ENCODE measurements at regions of chr9 and their contacts with region 1.

Region 1: DNA sequence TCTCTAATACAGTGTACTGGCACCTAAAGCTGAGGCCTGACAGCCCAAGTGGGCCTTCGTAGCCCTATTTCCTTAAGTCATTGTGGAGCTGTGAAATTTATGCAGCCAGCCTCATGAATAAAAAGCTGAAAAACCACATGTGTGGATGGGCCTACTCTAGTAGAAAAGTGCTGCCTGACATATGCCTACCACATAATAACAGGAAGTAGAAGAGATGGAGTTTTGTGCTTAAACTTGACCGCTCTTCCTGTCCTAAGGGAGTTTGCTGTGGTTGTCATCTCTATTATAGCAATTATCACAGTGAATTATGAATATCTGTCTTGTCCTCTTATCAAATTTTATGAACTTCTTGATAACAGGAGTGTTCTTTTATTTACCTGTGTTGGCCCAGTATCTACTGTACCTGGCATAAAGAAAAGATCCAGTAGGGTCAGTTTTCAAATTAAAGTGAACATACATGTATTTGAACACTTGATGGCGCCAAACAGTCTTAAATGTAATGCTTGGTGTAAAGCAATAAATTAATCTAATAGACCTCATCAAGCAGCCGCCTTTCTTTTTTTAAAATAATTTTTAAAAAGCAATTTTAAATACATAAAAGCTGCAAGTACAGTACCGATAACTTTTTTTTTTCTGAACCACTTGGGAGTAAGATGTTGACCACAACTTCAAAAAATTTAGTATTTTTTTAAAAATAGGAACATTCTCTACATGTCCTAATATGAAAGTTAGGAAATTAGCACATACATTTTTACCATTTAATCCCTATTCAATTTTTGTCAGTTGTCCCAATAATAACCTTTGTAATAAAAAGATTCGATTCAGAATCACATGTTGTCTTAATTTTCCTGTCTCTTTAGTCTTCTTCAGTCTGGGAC is 51.0 kb downstream of the FKTN start:
- DNase-seq: peak in 1 of 2 experiments; percentile 55
- H3K4me3 ChIP-seq: no peak overlapping the region
- H3K27ac ChIP-seq: no peak overlapping the region
- H3K4me1 ChIP-seq: no peaks in the 10 kb centered on the region
- H3K27me3 ChIP-seq: no peaks in the 10 kb centered on the region
- CTCF ChIP-seq: peak; percentile 78

Region 2: DNA sequence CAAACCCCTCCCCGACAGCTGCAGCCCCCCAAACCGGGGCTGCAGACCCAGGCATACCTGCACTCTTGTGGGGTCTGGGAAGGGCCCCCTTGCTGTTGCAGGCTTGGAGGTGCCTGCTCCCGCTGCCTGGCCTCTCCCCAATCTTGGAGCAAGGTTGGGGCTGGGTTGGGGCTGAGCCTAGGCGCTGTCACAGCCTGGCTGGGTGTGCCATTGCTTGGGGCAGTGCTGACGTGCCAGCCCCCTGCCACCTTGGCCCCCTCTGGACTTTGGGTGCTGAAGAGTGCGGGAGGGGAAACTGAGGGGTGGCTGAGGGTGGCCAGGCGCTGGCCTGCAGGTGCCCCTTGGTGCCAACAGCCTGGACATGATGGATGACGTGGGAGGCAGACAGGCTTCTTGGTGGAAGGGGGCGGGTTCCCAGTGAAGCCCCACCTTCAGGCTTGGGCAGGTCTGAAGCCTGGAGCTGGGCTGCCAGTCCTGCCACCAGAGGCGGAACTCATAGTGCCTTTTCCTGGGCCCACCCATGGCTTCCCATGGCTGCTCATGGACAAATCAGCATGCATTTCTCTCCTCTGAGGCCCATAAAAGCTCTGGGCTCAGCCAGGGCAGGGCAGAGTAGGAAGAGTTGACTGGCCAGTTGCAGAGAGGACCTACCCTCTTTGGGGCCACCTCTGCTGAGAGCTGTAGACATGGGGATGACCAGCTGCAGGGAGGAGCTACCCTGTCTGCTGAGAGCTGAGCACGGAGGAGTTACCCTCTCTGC is 104.5 kb after region 1 on chr9:
- CTCF ChIA-PET with region 1: interaction called, 3 read pairs
- POLR2A ChIA-PET with region 1: no interaction called
- intact Hi-C with region 1: loop called (anchors 2 kb)
- DNase-seq: no peak
- H3K4me3 ChIP-seq: no peak overlapping the region
- H3K27ac ChIP-seq: no peak overlapping the region
- H3K4me1 ChIP-seq: no peaks in the 10 kb centered on the region
- H3K27me3 ChIP-seq: no peaks in the 10 kb centered on the region
- CTCF ChIP-seq: no peak

Region 3: GRCh38 chr9:105881654-105882349 is 272.8 kb after region 1 on chr9:
- CTCF ChIA-PET with region 1: interaction called, 3 read pairs
- POLR2A ChIA-PET with region 1: no interaction called
- intact Hi-C with region 1: loop called (anchors 1 kb)
- DNase-seq: peak; percentile 48 to 69
- H3K4me3 ChIP-seq: no peak overlapping the region
- H3K27ac ChIP-seq: no peak overlapping the region
- H3K4me1 ChIP-seq: no peaks in the 10 kb centered on the region
- H3K27me3 ChIP-seq: no peaks in the 10 kb centered on the region
- CTCF ChIP-seq: peak; percentile 96